CD8-positive, alpha-beta T cell (primary cell): ENCODE measurements at regions of chr7 and their contacts with region 1.

Region 1: GRCh38 chr7:113015032-113015645 is 71.5 kb downstream of the GPR85 start:
- DNase-seq: no peak
- ATAC-seq: no peak
- H3K4me3 ChIP-seq: no peak overlapping the region
- H3K4me3 Mint-ChIP-seq: no peak overlapping the region
- H3K27ac ChIP-seq: no peak overlapping the region
- H3K27ac Mint-ChIP-seq: no peak overlapping the region
- H3K4me1 ChIP-seq: no peaks in the 10 kb centered on the region
- H3K4me1 Mint-ChIP-seq: no peaks in the 10 kb centered on the region
- H3K27me3 ChIP-seq: no peaks in the 10 kb centered on the region
- H3K27me3 Mint-ChIP-seq: no peaks in the 10 kb centered on the region
- CTCF ChIP-seq: no peak

Region 2: GRCh38 chr7:112120696-112121217 is 894.4 kb before region 1 on chr7:
- CTCF ChIA-PET with region 1: no interaction called
- POLR2A ChIA-PET with region 1: no interaction called
- intact Hi-C with region 1: no loop called
- DNase-seq: no peak
- ATAC-seq: no peak
- H3K4me3 ChIP-seq: no peak overlapping the region
- H3K4me3 Mint-ChIP-seq: no peak overlapping the region
- H3K27ac ChIP-seq: no peak overlapping the region
- H3K27ac Mint-ChIP-seq: no peak overlapping the region
- H3K4me1 ChIP-seq: no peaks in the 10 kb centered on the region
- H3K4me1 Mint-ChIP-seq: no peaks in the 10 kb centered on the region
- H3K27me3 ChIP-seq: no peaks in the 10 kb centered on the region
- H3K27me3 Mint-ChIP-seq: no peaks in the 10 kb centered on the region
- CTCF ChIP-seq: no peak

Region 3: DNA sequence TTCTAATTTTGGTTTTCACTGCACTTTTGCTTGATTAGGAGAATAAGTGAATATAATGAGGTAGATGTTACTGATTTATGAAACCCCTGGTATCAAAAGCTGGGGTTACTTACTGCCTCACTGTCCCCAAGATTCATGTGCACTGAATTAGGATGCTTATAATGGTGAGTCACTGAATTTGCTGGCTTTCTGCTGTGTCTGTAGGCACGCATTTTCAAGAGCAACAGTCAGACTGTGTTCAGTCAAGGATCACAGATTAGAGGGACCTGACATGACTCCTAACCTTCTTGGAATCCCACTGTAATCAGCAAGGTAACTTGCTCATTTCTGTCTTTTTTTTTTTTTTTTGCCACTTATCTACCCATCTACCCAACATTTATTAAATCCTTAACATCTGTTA is 11.8 kb after region 1 on chr7:
- CTCF ChIA-PET with region 1: no interaction called
- POLR2A ChIA-PET with region 1: no interaction called
- intact Hi-C with region 1: no loop called
- DNase-seq: no peak
- ATAC-seq: no peak
- H3K4me3 ChIP-seq: no peak overlapping the region
- H3K4me3 Mint-ChIP-seq: no peak overlapping the region
- H3K27ac ChIP-seq: no peak overlapping the region
- H3K27ac Mint-ChIP-seq: no peak overlapping the region
- H3K4me1 ChIP-seq: no peaks in the 10 kb centered on the region
- H3K4me1 Mint-ChIP-seq: no peaks in the 10 kb centered on the region
- H3K27me3 ChIP-seq: no peaks in the 10 kb centered on the region
- H3K27me3 Mint-ChIP-seq: peaks cover 6% of the 10 kb centered on the region
- CTCF ChIP-seq: no peak

Region 4: DNA sequence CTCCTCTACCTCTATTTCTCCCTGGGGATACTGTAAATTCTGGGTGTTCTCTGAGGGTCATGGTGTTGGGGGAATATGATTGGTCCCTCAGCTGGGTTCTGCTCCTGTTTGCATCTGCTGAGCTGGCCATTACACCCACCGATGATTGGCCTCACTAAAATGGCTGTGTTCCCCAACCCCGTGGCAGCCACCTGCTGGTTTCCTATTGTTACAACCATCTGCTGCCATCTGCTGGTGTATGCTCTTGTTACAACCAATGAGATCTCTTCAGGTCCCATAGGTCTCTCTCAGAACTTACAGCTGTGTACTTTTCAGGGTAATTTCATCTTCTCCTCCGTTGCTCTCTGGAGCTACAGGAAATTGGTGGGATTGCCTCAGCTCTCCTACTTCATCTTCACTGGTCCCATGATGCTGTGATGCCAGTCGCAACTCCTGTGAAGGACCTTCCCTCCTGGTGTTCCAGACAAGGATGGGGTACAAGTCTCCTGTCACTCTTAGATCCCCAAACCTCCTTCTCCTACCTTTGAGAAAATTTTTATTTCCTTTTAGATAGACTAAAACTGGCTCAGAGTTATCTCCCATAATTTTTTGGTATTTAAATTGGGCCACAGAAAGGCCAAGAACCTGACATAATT is 406.7 kb after region 1 on chr7:
- CTCF ChIA-PET with region 1: no interaction called
- POLR2A ChIA-PET with region 1: no interaction called
- intact Hi-C with region 1: loop called in 1 of 2 experiments (anchors 10 kb)
- DNase-seq: peak; percentile 37 to 81 (median 70)
- ATAC-seq: peak; percentile 94
- H3K4me3 ChIP-seq: no peak overlapping the region
- H3K4me3 Mint-ChIP-seq: no peak overlapping the region
- H3K27ac ChIP-seq: no peak overlapping the region
- H3K27ac Mint-ChIP-seq: no peak overlapping the region
- H3K4me1 ChIP-seq: no peaks in the 10 kb centered on the region
- H3K4me1 Mint-ChIP-seq: peaks cover 3% of the 10 kb centered on the region
- H3K27me3 ChIP-seq: no peaks in the 10 kb centered on the region
- H3K27me3 Mint-ChIP-seq: peaks cover under 1% of the 10 kb centered on the region
- CTCF ChIP-seq: peak; percentile 89